ENCODE measurements at regions of chr7 and their contacts with region 1.

Region 1: DNA sequence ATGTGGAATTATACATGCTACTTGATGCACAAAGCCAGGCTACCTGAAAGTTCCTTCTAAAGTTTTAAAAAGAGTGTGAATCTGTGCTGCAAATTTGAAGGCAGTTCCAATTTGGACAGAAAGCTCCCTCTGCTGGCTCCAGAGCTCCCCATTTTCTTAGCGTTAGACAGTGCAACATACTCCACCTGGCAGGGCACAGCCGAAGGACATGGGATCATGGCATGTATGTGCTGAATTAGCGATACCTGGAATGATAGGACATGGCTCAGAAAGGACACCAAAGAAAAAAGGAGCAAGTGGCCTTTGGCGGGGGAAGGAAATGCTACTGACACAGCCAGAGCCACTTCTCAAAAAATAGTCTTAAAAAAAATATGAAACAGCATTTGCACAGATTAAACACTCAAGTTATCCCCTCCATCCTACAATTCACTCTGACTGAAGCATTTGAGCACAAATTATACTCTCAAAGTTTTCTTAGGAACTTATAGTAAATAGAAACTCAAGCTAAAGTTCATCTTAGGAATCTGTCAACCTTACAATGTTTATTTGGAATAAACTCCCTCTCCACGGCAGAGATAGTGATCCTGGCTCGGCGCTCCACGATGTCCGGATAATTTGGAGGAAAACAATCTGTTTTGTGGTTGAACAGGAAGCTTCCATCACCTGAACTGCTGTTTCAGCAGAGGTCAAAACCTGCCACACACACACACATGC is 80.0 kb downstream of the C7orf25 start:
- DNase-seq: peak in 1 of 2 experiments; percentile 18
- H3K4me3 ChIP-seq: no peak overlapping the region
- H3K27ac ChIP-seq: no peak overlapping the region
- H3K4me1 ChIP-seq: 0 out of 2 replicates have a peak, but pooled peaks cover 4% of the 10 kb centered on the region
- H3K27me3 ChIP-seq: peaks cover 48% of the 10 kb centered on the region
- CTCF ChIP-seq: peak; percentile 63

Region 2: GRCh38 chr7:42876182-42877068 is 44.5 kb after region 1 on chr7:
- CTCF ChIA-PET with region 1: no interaction called
- POLR2A ChIA-PET with region 1: interaction called, 10 read pairs
- intact Hi-C with region 1: no loop called
- DNase-seq: peak; percentile 43 to 59
- H3K4me3 ChIP-seq: no peak overlapping the region
- H3K27ac ChIP-seq: no peak overlapping the region
- H3K4me1 ChIP-seq: no peaks in the 10 kb centered on the region
- H3K27me3 ChIP-seq: no peaks in the 10 kb centered on the region
- CTCF ChIP-seq: peak; percentile 95

Measured in PC-9 (cell line).